Activated naive CD4-positive, alpha-beta T cell treated with anti-CD3 and anti-CD28 coated beads, Interleukin-2, amount 10 ng/mL, durations not matched to agents 7 days and 5 days (primary cell): ENCODE measurements at regions of chr6 and their contacts with region 1.

Region 1: DNA sequence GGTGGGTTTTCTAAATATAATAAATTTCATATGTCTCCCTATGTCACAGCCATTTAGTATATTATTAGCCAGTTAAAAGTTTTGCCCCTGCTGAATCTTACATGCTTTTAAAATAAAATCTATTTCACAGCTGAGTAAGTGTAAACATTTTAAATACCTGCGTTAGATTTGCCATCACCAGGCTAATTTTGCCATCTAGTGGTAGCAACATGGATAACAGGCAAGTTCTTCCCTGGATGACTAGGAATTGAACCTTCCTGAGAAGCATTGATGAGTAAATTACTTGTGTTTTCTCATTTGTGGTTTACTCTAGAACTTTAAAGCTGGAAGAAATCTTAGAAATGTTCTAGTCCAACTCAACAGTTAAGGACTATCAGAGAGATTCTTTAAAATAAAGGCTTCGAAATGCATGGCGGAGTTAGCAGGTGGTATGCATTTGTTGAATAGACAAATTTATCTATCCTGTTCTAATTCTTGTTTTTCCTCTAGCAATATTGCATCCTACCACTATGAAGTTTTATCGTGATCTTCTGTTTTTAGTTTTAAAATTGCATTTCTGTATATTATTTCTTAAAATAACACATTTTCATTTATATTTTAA is 2.6 kb downstream of the PRSS35 start:
- DNase-seq: peak; percentile 33
- H3K4me3 Mint-ChIP-seq: no peak overlapping the region
- H3K27ac Mint-ChIP-seq: no peak overlapping the region
- H3K4me1 Mint-ChIP-seq: peaks cover 3% of the 10 kb centered on the region
- H3K27me3 Mint-ChIP-seq: peaks cover 27% of the 10 kb centered on the region

Region 2: DNA sequence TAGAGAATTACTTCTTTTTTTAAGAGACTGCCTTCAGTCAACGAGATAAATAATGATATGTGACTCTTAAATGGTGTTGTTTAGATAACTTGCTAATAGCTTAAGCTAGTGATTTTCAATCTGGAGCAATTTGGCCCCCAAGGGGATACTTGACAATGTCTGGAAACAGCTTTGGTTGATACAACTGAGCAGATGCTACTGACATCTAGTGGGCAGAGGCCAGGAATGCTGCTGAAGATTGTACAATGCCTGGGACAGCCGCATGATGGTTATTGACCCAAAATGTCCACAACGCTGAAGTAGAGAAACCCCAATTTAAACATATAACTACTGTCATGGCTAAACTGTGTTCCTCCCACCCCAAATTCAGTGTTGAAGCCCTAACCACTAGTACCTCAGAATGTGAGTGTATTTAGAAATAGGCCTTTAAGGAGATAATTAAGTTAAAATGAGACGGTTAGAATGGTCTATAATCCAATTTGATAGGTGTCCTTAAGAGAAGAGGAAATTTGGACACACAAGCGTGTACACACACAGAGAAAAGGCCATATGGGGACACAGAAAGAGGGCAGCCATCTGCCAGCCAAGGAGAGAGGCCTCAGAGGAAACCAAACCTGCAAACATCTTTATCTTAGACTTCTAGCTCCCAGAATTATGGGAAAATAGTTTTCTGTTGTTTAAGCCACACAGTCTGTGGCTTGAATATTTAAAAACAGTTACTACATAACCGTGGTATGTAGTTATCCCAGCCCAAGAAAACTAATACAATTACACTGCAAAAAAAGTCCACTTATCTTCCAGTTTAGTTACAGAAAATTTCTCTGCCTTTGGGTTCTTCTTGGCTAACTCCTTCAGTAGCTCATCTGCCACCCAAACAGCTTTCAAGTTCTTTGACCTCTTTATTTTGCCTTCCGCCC is 299.6 kb before region 1 on chr6:
- CTCF ChIA-PET with region 1: interaction called, 12 read pairs
- DNase-seq: peak; percentile 70
- H3K4me3 Mint-ChIP-seq: no peak overlapping the region
- H3K27ac Mint-ChIP-seq: no peak overlapping the region
- H3K4me1 Mint-ChIP-seq: no peaks in the 10 kb centered on the region
- H3K27me3 Mint-ChIP-seq: peaks cover 12% of the 10 kb centered on the region

Region 3: GRCh38 chr6:83221889-83222479 is 293.0 kb before region 1 on chr6:
- CTCF ChIA-PET with region 1: interaction called, 64 read pairs
- DNase-seq: no peak
- H3K4me3 Mint-ChIP-seq: no peak overlapping the region
- H3K27ac Mint-ChIP-seq: no peak overlapping the region
- H3K4me1 Mint-ChIP-seq: no peaks in the 10 kb centered on the region
- H3K27me3 Mint-ChIP-seq: peaks cover 4% of the 10 kb centered on the region

Region 4: GRCh38 chr6:83265384-83265783 is 249.6 kb before region 1 on chr6:
- CTCF ChIA-PET with region 1: no interaction called
- DNase-seq: no peak
- H3K4me3 Mint-ChIP-seq: no peak overlapping the region
- H3K27ac Mint-ChIP-seq: no peak overlapping the region
- H3K4me1 Mint-ChIP-seq: no peaks in the 10 kb centered on the region
- H3K27me3 Mint-ChIP-seq: no peaks in the 10 kb centered on the region

Region 5: GRCh38 chr6:83467620-83468036 is 47.3 kb before region 1 on chr6:
- CTCF ChIA-PET with region 1: no interaction called
- DNase-seq: no peak
- H3K4me3 Mint-ChIP-seq: no peak overlapping the region
- H3K27ac Mint-ChIP-seq: no peak overlapping the region
- H3K4me1 Mint-ChIP-seq: no peaks in the 10 kb centered on the region
- H3K27me3 Mint-ChIP-seq: no peaks in the 10 kb centered on the region